ENCODE measurements at regions of chr12 and their contacts with region 1.

Region 1: DNA sequence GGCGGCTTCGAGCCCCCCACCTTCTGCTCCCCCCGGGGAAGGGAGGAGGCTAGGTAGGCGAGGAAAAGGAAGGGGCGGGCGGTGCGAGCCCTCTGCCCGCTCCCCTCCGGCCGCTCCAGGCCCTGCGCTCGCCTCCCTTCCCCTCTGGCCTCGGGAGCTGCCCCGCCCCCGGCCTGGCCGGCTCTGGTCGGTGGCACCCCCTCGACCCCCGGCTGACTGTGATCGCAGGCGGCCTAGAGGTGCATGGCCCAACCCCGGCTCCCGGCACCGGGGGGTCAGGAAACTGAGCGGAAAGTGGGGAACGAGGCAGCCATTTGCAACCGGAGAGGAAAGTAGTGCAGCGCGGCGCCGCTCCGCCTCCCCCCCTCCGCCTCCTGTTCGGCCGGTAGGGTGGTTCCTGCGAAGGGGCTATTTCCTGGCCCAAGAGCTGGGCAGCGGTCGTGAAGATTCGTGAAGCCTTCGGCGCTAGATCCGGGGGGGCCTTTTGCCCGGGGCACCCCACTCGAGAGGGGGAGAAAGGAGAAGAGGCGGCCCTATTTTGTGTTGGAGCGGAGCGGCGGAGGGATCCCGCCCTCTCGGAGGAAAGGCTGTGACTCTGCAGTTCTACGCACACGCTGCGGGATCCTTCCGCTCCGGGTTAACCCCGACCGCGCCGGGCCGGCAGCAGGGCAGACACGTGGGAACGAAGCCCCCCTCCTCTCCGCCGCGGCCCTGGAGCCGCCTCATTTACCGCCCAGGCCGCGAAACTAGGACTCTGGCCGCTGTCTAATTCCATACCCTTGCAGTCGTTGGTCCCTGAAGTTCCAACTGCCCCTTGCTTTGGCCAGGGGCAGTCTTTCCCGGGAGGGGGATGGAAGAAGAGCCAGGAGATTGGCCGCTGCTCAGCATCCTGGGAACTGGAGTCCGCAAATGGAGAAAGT is at the start of gene KMT2D:
- DNase-seq: peak; percentile 91
- H3K4me3 Mint-ChIP-seq: peak within 1 kb of the TSS; percentile 93
- H3K27ac Mint-ChIP-seq: peak within 1 kb of the TSS; percentile 96
- H3K4me1 Mint-ChIP-seq: peaks cover 51% of the 10 kb centered on the region
- H3K27me3 Mint-ChIP-seq: no peaks in the 10 kb centered on the region
- total RNA-seq, gene KMT2D: 44.9 to 49.0 TPM

Region 2: GRCh38 chr12:48651681-48652080 is 408.8 kb before region 1 on chr12:
- CTCF ChIA-PET with region 1: no interaction called
- intact Hi-C with region 1: no loop called
- DNase-seq: no peak
- H3K4me3 Mint-ChIP-seq: no peak overlapping the region
- H3K27ac Mint-ChIP-seq: no peak overlapping the region
- H3K4me1 Mint-ChIP-seq: no peaks in the 10 kb centered on the region
- H3K27me3 Mint-ChIP-seq: no peaks in the 10 kb centered on the region

Region 3: DNA sequence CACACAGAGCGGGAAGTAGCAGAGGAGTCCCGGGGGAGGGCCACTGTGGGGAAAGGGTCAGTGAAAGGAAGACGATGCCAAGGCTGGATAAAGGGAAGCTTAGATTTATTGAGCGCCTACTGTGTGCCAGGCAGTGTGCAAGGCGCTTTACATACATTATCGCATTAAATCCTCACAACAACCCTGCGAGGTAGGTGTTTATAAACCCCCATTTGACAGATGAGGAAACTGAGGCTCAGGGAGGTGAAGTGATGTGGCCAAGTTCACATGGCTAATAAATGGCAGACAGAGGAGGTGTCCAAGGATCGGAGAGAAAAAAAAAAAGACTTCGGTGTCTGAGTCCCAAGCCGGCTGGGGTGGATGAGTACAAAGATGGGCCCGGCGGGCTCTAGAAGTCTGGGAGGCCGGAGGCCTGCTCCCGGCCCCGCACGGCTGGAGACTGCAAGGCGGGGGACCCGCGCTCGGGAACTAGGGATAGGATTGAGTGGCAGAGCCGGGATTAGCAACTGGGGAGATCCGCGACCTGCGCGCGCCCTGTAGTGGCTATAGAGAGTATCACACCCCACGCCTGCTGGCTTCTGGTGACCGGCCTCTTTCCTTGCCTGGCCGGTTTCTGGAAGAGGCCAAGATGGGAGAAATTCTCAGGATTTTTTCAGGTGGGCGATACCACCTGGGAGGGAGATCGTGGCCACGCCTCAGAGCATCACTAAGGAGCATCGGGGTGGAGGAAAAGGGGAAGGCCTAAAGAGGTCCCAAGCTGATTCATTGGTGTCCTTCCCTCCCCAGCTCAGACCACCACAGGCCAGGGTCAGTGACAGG is 65.2 kb before region 1 on chr12:
- CTCF ChIA-PET with region 1: interaction called, 3 read pairs
- intact Hi-C with region 1: loop called (anchors 2 kb)
- DNase-seq: peak; percentile 69
- H3K4me3 Mint-ChIP-seq: peak overlapping the region; percentile 10
- H3K27ac Mint-ChIP-seq: no peak overlapping the region
- H3K4me1 Mint-ChIP-seq: peaks cover 33% of the 10 kb centered on the region
- H3K27me3 Mint-ChIP-seq: peaks cover 54% of the 10 kb centered on the region

Region 4: DNA sequence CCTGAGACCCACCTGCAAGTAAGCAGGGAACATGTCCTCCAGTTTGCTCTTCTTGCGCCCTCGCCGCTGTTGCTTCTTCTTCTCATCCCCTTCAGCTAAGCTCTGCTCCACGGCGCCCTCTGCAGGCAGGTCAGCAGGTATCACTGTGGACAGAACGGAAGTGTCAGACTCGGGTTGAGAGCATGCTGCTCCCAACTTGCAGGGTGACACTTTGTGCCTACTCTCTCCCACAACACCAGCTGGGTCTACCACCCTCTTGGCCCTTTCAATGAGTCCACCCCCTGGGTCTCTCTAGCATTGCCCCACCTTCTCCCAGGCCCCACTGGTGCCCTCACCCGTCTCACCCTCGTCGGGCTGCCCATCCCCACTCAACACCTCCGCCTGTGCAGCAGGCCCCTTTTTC is 16.6 kb before region 1 on chr12:
- CTCF ChIA-PET with region 1: interaction called, 28 read pairs
- intact Hi-C with region 1: no loop called
- DNase-seq: peak; percentile 85
- H3K4me3 Mint-ChIP-seq: no peak overlapping the region
- H3K27ac Mint-ChIP-seq: no peak overlapping the region
- H3K4me1 Mint-ChIP-seq: peaks cover 2% of the 10 kb centered on the region
- H3K27me3 Mint-ChIP-seq: no peaks in the 10 kb centered on the region

Region 5: DNA sequence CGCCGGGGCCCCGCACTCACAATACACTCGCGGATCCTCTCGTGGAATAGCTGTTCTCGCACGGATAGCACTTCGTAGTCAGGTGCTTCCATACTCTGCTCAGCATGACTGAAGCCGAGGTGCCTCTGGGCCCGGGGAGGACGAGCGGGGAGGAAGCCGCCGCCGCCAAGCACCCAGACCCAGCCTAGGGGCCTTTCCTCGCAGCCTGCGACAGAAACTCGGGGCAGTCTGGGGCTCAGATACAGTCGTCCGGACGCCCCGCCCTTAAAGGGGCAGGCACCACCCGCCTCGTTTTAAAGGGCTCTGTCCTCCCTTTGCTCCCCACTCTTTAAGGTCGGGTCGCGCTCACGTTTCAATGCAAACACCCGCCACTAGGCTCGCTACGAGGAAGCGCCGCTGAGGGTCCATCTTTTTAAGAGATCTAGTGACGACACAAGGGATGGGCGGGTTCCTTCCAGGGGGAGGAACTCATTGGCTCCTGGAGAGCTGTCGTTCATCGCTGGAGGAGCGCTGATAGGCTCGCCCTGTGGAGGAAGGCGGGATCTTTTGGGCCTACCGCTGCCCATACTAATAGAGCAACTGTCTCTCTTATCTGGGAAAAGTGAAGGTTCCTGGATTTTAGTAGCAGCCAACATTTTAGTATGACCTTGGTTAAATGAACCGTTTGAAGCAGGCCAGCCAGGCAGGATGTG is 50.1 kb after region 1 on chr12 and contains the start of gene LMBR1L:
- CTCF ChIA-PET with region 1: interaction called, 10 read pairs
- intact Hi-C with region 1: no loop called
- DNase-seq: peak; percentile 98
- H3K4me3 Mint-ChIP-seq: peak within 1 kb of the TSS; percentile 93
- H3K27ac Mint-ChIP-seq: peak within 1 kb of the TSS; percentile 94
- H3K4me1 Mint-ChIP-seq: peaks cover 37% of the 10 kb centered on the region
- H3K27me3 Mint-ChIP-seq: no peaks in the 10 kb centered on the region
- total RNA-seq, gene LMBR1L: 60.1 to 66.8 TPM

Region 6: DNA sequence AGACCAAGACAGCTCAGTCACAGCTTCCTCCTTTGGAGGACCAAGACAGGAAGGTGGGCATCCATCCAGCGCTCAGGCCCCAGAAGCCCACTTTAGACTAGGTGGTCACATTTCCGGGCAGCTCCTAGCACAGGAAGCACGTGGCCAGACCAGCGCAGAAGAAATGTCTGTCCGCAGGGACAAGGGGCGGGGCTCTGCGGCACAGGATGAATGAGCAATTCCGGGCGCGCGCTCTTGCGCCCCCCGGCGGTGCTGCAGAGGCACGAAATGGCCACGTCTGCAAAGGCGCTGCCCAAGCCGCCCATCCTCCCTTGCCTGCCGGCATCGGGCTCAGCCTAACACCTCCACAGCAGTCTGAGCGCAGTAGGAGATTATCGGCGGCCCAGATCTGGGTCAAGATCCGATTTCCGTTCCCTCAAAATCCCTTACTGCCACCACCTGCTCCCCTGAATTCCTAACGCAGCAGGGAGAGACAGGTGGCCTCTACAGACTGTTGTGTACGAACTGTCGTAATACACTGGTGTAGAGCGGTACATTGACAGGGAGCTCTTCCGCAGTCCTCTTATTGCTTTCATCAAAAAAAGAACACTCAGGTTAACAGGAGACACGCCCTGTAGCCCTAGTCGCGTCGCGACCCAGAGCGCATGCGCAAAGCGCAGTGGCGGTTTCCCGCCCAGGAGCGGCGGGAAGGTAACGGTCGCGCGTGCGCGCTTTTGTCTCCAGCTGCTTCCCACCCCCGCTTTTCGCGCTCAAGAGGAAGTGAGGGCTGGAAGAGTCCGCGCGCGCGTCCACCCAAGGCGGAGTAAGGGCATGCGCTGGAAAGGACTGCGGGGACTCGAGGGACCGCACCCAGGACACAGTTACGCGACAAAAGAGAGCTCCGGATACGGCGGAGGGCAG is 69.9 kb after region 1 on chr12:
- CTCF ChIA-PET with region 1: interaction called, 4 read pairs
- intact Hi-C with region 1: loop called (anchors 1 kb)
- DNase-seq: peak; percentile 96
- H3K4me3 Mint-ChIP-seq: peak overlapping the region; percentile 97
- H3K27ac Mint-ChIP-seq: peak overlapping the region; percentile 100
- H3K4me1 Mint-ChIP-seq: peaks cover 43% of the 10 kb centered on the region
- H3K27me3 Mint-ChIP-seq: no peaks in the 10 kb centered on the region

Region 7: DNA sequence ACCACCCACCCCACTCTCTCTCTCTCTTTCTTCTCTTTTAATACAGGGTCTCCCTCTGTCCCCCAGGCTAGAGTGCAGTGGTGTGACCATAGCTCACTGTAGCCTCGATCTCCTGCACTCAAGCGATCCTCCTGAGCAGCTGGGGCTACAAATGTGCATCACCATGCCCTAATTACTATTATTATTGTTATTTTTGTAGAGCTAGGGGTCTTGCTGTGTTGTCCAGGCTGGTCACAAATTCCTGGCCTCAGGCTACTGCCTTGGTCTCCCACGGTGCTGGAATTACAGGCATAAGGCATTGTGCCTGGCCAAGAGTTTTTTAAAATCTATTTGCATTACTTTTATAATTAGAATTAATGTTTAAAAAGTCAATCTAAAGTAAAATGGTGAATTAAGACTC is 93.7 kb after region 1 on chr12:
- CTCF ChIA-PET with region 1: no interaction called
- intact Hi-C with region 1: no loop called
- DNase-seq: no peak
- H3K4me3 Mint-ChIP-seq: no peak overlapping the region
- H3K27ac Mint-ChIP-seq: no peak overlapping the region
- H3K4me1 Mint-ChIP-seq: peaks cover 2% of the 10 kb centered on the region
- H3K27me3 Mint-ChIP-seq: no peaks in the 10 kb centered on the region

Region 8: GRCh38 chr12:49232940-49233841 is 172.7 kb after region 1 on chr12:
- CTCF ChIA-PET with region 1: interaction called, 6 read pairs
- intact Hi-C with region 1: loop called (anchors 1 kb)
- DNase-seq: no peak
- H3K4me3 Mint-ChIP-seq: peak overlapping the region; percentile 85
- H3K27ac Mint-ChIP-seq: peak overlapping the region; percentile 81
- H3K4me1 Mint-ChIP-seq: peaks cover 12% of the 10 kb centered on the region
- H3K27me3 Mint-ChIP-seq: no peaks in the 10 kb centered on the region